CD14-positive monocyte (primary cell): ENCODE measurements at regions of chr11 and their contacts with region 1.

Region 1: DNA sequence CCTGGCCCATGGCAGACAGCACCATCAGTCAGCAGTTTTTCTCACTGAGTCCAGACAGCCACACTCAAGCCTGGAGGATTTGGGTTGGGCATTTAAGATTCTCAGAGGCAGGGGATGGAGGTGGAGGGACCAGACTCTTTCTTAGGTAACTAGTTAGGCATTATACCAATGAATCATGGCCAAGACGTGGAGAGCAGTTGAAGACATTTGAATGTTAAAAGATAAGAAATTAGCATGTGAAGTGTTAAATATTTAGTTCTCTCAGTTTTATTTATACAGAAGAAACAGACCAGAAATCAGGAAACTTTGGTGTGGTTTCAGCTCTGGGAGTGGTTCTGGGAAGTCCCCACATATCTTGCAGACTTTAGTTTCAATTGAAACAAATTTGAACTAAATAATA is 9.9 kb downstream of the GTF2H1 start:
- DNase-seq: no peak
- H3K4me3 ChIP-seq: no peak overlapping the region
- H3K4me3 Mint-ChIP-seq: no peak overlapping the region
- H3K27ac ChIP-seq: no peak overlapping the region
- H3K27ac Mint-ChIP-seq: peak overlapping the region in 4 of 7 donors; percentile 32 to 80 (median 53)
- H3K4me1 ChIP-seq: no peaks in the 10 kb centered on the region
- H3K4me1 Mint-ChIP-seq: peaks cover 8% of the 10 kb centered on the region
- H3K27me3 ChIP-seq: no peaks in the 10 kb centered on the region
- H3K27me3 Mint-ChIP-seq: no peaks in the 10 kb centered on the region
- CTCF ChIP-seq: no peak

Region 2: GRCh38 chr11:17921659-17922415 is 410.5 kb before region 1 on chr11:
- intact Hi-C with region 1: no loop called
- DNase-seq: peak; percentile 12 to 26 (median 25)
- H3K4me3 ChIP-seq: peak overlapping the region in 1 of 3 experiments; percentile 24
- H3K4me3 Mint-ChIP-seq: peak overlapping the region; percentile 17 to 46
- H3K27ac ChIP-seq: peak overlapping the region; percentile 39 to 67
- H3K27ac Mint-ChIP-seq: peak overlapping the region in 5 of 7 donors; percentile 7 to 91 (median 81)
- H3K4me1 ChIP-seq: peaks cover 20 to 28% of the 10 kb centered on the region in 2 donors
- H3K4me1 Mint-ChIP-seq: peaks cover 42% of the 10 kb centered on the region
- H3K27me3 ChIP-seq: no peaks in the 10 kb centered on the region
- H3K27me3 Mint-ChIP-seq: peaks cover 0 to under 1% (median 0%) of the 10 kb centered on the region in 3 donors
- CTCF ChIP-seq: no peak

Region 3: DNA sequence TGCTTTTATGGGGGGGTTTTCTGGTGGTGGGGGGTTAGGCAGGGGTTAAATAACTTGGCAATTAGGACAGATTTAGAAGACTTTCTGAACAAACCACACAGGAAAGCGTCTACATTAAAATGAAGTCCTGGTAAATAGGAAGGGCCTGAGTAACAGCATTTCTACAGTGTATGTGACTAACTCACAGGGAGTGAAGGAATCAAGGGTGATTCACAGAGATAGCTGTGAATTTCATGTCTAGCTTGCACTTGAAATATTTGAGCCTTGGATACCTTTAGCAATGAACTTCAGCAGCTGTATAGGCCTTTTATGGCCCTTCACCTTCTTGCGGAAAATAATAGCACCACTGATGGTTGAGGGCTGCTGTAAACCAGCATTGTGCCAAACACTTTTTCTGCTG is 35.9 kb after region 1 on chr11:
- intact Hi-C with region 1: loop called in 1 of 2 experiments (anchors 5 kb)
- DNase-seq: peak in 1 of 3 donors; percentile 76
- H3K4me3 ChIP-seq: no peak overlapping the region
- H3K4me3 Mint-ChIP-seq: no peak overlapping the region
- H3K27ac ChIP-seq: peak overlapping the region in 1 of 2 donors; percentile 11
- H3K27ac Mint-ChIP-seq: no peak overlapping the region
- H3K4me1 ChIP-seq: peaks cover 10 to 15% of the 10 kb centered on the region in 2 donors
- H3K4me1 Mint-ChIP-seq: peaks cover 12% of the 10 kb centered on the region
- H3K27me3 ChIP-seq: no peaks in the 10 kb centered on the region
- H3K27me3 Mint-ChIP-seq: no peaks in the 10 kb centered on the region
- CTCF ChIP-seq: no peak